ENCODE measurements at regions of chr17 and their contacts with region 1.

Region 1: GRCh38 chr17:68497885-68498319 is 14.3 kb upstream of the PRKAR1A start:
- DNase-seq: no peak
- ATAC-seq: no peak
- H3K4me3 ChIP-seq: no peak overlapping the region
- H3K27ac ChIP-seq: no peak overlapping the region
- H3K4me1 ChIP-seq: no peaks in the 10 kb centered on the region
- CTCF ChIP-seq: no peak
- EP300 ChIP-seq: no peak
- POLR2A ChIP-seq: no peak
- RAD21 ChIP-seq: no peak

Region 2: DNA sequence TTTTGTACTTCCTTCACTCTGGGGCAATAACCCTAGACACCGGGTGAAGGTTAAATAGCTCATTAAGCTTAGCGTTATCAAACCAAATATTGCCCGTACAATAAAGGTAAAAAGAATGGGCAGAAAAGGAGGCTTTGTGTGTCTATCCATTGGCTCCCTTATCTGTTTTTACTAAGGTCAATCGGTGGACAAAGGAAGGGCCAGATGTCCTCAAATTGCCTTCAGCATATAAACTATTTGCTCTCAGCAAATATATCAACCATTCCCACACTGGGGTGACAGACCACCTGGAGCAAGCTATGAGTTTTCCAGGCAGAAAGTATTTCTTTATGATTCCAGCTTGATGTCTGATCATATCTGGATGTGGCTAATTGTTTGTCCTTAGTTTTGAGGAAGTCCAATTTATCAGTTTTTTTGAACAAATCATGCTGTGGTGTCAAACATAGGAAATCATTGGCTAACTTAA is 15.3 kb before region 1 on chr17:
- CTCF ChIA-PET with region 1: interaction called, 12 read pairs
- POLR2A ChIA-PET with region 1: no interaction called
- DNase-seq: no peak
- ATAC-seq: no peak
- H3K4me3 ChIP-seq: no peak overlapping the region
- H3K27ac ChIP-seq: no peak overlapping the region
- H3K4me1 ChIP-seq: no peaks in the 10 kb centered on the region
- CTCF ChIP-seq: no peak
- EP300 ChIP-seq: no peak
- POLR2A ChIP-seq: no peak
- RAD21 ChIP-seq: no peak

Region 3: GRCh38 chr17:68527323-68527722 is 29.4 kb after region 1 on chr17:
- CTCF ChIA-PET with region 1: no interaction called
- POLR2A ChIA-PET with region 1: no interaction called
- DNase-seq: no peak
- ATAC-seq: no peak
- H3K4me3 ChIP-seq: no peak overlapping the region
- H3K27ac ChIP-seq: no peak overlapping the region
- H3K4me1 ChIP-seq: no peaks in the 10 kb centered on the region
- CTCF ChIP-seq: no peak
- EP300 ChIP-seq: no peak
- POLR2A ChIP-seq: no peak
- RAD21 ChIP-seq: no peak

Region 4: DNA sequence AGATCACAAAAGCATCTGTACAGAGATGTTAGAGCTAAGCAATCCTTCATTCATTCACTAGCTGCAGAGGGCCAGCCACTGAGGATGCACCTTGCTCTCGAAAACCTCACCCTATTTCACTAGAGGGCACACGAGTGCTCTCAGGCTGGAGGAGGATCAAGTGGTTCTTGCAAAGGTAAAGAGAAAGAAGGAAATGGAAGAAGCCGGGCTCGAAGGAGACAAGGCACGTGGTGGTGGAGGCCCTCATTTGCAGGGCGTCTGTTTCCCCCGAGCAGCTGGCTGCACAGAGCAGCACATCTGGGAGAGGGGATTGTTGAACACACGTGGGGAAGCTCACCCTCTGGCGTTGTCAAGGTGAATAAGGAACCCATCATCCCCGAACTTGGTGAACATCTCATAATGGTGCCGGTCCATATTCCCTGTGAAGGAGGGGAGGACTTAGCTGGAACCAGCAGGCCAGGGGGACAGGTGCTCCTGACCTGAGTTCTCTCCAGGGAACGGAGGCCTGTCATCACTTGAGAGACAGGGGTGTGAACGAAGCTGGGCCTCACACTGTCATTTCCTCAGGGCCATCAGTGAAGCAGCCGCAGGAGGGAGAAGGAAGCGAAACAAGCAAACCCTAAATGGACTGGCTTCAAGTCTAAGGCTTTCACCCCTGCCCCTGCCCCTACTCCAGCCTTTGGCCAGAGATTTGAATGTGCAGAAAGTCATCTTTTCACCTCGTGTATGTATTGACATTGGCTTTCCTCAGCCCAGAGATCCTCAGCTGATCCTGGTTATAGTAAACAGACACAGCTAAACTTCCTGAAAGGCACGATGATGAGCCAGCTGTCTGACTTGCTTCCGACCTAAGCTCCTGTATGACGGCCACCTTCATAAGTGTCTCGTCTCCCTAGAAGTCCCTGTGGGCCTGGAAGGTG is 41.9 kb after region 1 on chr17:
- CTCF ChIA-PET with region 1: no interaction called
- POLR2A ChIA-PET with region 1: no interaction called
- DNase-seq: peak in 1 of 2 experiments; percentile 22
- ATAC-seq: peak in 1 of 2 experiments; percentile 18; a peak in 2 of 6 replicates
- H3K4me3 ChIP-seq: no peak overlapping the region
- H3K27ac ChIP-seq: no peak overlapping the region
- H3K4me1 ChIP-seq: peaks cover 13% of the 10 kb centered on the region; the same call in 2 of the 3 replicates
- CTCF ChIP-seq: no peak
- EP300 ChIP-seq: no peak
- POLR2A ChIP-seq: no peak
- RAD21 ChIP-seq: no peak